ENCODE measurements at regions of chr7 and their contacts with region 1.

Region 1: GRCh38 chr7:23431702-23432199 is 38.5 kb downstream of the IGF2BP3 start:
- DNase-seq: no peak
- CTCF ChIP-seq: no peak

Region 2: DNA sequence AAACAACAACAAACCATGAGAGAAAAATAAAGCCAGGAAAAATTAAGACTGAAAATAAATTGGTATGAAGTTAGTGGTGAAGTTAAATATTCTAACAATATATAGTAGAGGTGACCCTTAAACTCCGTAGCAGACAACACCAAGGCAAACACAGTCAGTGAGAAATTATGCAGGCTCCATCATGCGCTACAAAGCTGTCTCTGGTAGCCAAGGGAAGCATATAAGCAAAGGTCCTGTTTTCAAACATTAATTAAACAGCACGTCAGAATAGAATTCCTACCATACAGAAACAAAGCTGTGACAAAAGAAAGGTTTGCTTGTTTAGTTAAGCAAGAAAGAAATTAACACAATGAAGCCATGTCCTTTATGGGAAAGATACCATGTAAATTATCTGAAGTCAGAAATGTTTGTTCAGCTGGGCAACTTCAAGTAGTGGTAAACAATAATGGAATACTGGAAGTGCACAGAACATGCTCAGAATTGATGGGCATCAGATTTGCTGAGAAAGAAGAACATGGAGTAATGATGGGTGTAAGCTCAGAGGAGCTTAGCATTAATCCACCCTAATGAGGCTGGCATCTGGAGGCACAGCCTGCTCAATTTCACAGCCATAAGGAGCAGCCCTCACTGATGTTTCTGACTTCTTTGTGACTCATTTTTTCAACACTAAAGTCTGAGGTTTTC is 37.1 kb before region 1 on chr7:
- CTCF ChIA-PET with region 1: no interaction called
- POLR2A ChIA-PET with region 1: no interaction called
- DNase-seq: no peak
- CTCF ChIP-seq: no peak

Region 3: DNA sequence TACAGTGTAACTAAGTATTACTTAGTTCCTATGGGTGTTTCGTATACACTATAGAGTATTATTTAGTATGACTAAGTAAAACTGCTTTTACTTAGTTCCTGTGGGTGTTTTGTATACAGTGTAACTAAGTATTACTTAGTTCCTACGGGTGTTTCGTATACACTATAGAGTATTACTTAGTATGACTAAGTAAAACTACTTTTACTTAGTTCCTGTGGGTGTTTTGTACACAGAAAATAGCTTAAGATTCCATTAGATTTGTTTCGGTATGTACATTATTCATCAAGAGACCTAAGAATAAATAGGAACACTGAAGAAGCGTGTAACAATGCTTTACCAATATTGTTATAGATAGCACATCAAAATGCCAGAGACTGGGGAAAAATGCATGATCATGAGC is 13.6 kb after region 1 on chr7:
- CTCF ChIA-PET with region 1: interaction called, 20 read pairs
- POLR2A ChIA-PET with region 1: no interaction called
- DNase-seq: no peak
- CTCF ChIP-seq: no peak

Region 4: GRCh38 chr7:23462846-23463245 is 31.1 kb after region 1 on chr7:
- CTCF ChIA-PET with region 1: interaction called, 34 read pairs
- POLR2A ChIA-PET with region 1: no interaction called
- DNase-seq: no peak
- CTCF ChIP-seq: peak; percentile 34

Region 5: DNA sequence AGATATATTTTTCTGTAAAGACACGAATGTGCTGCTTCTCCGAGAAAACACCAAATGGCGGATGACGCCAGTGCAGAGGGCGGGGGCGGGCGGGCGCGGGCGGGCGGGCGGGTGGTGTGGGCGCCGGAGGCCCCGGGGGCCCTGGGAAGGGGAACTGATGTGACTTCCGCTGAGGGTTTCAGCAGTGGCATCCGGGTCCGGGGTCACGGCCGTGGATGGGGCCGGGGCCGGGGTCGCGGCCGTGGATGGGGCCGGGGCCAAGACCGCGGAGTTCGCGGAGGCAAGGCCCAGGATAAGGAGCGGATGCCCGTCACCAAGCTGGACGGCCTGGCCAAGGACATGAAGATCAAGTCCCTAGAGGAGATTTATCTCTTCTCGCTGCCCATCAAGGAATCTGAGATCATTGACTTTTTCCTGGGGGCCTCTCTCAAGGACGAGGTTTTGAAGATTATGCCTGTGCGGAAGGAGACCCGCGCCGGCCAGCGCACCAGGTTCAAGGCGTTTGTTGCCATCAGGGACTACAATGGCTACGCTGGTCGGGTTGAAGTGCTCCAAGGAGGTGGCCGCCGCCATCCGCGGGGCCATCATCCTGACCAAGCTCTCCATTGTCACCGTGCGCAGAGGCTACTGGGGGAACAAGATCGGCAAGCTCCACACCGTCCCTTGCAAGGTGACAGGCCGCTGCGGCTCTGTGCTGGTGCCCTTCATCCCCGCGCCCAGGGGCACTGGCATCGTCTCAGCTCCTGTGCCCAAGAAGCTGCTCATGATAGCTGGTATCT is 58.8 kb after region 1 on chr7:
- CTCF ChIA-PET with region 1: interaction called, 10 read pairs
- POLR2A ChIA-PET with region 1: no interaction called
- DNase-seq: peak; percentile 80
- CTCF ChIP-seq: no peak

Region 6: DNA sequence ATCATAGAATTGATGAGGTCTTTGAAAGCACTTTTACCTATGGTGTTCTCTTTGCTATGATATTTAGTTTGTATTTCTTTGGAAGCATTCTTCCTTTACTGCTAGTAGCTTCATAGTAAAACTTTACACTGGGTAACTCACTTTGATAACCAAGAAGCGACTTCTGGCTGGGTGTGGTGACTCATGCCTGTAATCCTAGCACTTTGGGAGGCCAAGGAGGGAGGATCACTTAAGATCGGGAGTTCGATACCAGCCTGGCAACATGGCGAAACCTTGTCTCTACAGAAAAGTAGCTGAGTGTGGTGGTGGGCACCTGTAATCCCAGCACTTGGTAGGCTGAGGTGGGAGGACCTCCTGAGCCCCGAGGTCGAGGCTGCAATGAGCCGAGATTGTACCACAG is 201.7 kb after region 1 on chr7:
- CTCF ChIA-PET with region 1: no interaction called
- POLR2A ChIA-PET with region 1: no interaction called
- DNase-seq: no peak
- CTCF ChIP-seq: no peak

Measured in GM10248 (cell line).